ENCODE measurements at regions of chr1 and their contacts with region 1.

Region 1: GRCh38 chr1:145720877-145721671 is 1.8 kb downstream of the CD160 start:
- DNase-seq: peak; percentile 93
- H3K4me3 Mint-ChIP-seq: peak overlapping the region; percentile 79
- H3K27ac Mint-ChIP-seq: no peak overlapping the region
- H3K4me1 Mint-ChIP-seq: peaks cover 17% of the 10 kb centered on the region
- H3K27me3 Mint-ChIP-seq: peaks cover 24% of the 10 kb centered on the region

Region 2: DNA sequence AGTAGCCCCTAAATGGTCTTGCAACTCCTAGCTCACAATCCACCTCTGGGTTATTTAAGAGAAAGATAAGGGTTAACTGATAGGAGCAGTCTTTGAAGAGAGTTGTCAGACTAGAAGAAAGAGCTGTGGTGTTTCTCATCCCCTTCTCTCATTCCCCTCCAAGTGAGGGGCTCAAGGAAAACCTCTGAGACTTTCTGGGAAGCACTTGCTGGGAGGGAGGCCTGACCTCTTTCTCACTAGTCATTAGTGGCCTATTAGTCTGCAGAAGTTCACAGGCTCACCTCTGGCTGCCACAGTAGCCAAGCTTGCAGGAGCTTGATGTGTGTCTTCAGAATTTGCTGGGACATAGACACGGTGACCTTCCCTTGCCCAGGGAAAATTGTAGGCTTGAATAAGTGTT is 119.5 kb before region 1 on chr1:
- intact Hi-C with region 1: loop called (anchors 10 kb)
- DNase-seq: no peak
- H3K4me3 Mint-ChIP-seq: no peak overlapping the region
- H3K27ac Mint-ChIP-seq: no peak overlapping the region
- H3K4me1 Mint-ChIP-seq: no peaks in the 10 kb centered on the region
- H3K27me3 Mint-ChIP-seq: peaks cover 21% of the 10 kb centered on the region

Region 3: GRCh38 chr1:145740266-145740665 is 19.2 kb after region 1 on chr1:
- intact Hi-C with region 1: no loop called
- DNase-seq: no peak
- H3K4me3 Mint-ChIP-seq: no peak overlapping the region
- H3K27ac Mint-ChIP-seq: no peak overlapping the region
- H3K4me1 Mint-ChIP-seq: no peaks in the 10 kb centered on the region
- H3K27me3 Mint-ChIP-seq: no peaks in the 10 kb centered on the region

Measured in activated CD4-positive, alpha-beta T cell treated with anti-CD3 and anti-CD28 coated beads, Interleukin-2, amount 10 ng/mL, durations not matched to agents 24 days and 14 days (primary cell).